ENCODE measurements at regions of chr4 and their contacts with region 1.

Region 1: DNA sequence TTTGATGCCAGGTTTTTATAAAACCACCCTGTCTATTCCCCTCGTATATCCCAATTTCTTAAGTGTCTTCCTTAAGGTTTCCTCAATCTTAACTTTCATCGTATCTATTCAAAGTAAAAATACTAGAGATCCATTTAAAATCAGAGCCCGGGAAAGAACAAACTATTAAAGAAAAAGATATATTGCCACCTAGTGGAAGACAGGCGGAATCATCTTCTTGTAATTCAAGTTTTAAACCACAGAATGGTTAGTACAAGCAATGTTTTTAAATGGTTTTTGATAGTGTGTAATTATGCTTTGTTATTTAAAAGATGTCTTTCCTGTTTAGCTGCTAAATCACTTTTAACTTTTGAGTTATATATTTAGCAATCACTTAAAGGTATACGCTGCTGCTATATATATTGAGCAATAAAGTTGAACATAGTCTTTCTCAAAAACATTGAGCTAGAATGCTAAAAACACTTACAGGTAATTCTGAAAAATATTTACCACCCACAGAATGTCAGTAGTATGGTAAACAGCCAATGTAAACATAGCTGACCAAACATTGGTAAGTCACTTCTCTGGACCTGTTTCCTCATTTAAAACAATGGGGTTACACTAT is 18.2 kb downstream of the PRDM8 start:
- DNase-seq: no peak
- ATAC-seq: peak in 1 of 4 donors; percentile 51
- H3K4me3 ChIP-seq: no peak overlapping the region
- H3K27ac ChIP-seq: peak overlapping the region in 2 of 12 donors; percentile 8 to 10
- H3K4me1 ChIP-seq: no peaks in the 10 kb centered on the region
- H3K27me3 ChIP-seq: peaks cover 0 to 41% (median 5%) of the 10 kb centered on the region in 9 donors
- CTCF ChIP-seq: peak; percentile 63 to 79 (median 73)
- POLR2A ChIP-seq: no peak

Region 2: DNA sequence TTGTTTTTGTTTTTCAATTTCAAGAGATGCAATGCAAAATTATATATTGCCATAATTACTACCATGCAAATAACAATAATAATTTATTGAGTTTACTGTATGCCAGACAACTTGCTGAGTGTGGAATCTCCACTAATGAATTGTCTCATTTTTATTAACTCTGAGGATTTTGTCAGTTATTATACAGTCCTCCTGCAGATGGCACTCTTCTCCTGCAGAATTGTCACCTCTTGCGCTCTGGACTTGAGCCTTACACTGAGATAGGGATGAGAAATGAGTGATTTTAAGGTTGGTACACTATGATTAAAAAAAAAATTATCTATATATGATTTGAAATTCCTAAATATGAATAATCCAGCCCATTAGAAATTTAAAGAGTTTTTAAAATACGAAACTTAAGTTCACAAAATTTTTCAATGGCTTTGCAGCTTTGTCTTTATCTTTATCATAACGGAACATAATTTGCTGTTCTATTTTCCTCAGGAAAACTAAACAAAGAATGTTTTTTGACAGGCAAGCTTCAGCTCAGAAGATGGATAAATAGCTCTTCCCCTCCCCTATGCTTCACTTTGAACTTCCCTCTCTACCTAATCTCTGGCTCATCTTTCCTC is 1263.6 kb before region 1 on chr4:
- intact Hi-C with region 1: loop called (anchors 1 to 10 kb)
- DNase-seq: peak in 1 of 5 donors; percentile 18
- ATAC-seq: peak; percentile 52 to 75 (median 68)
- H3K4me3 ChIP-seq: no peak overlapping the region
- H3K27ac ChIP-seq: no peak overlapping the region
- H3K4me1 ChIP-seq: no peaks in the 10 kb centered on the region
- H3K27me3 ChIP-seq: no peaks in the 10 kb centered on the region
- CTCF ChIP-seq: peak; percentile 54 to 85 (median 70)
- POLR2A ChIP-seq: no peak

Region 3: GRCh38 chr4:79030973-79031372 is 1184.6 kb before region 1 on chr4:
- intact Hi-C with region 1: loop called in 1 of 10 experiments (anchors 10 kb)
- DNase-seq: no peak
- ATAC-seq: no peak
- H3K4me3 ChIP-seq: no peak overlapping the region
- H3K27ac ChIP-seq: no peak overlapping the region
- H3K4me1 ChIP-seq: peaks cover 0 to 5% (median 0%) of the 10 kb centered on the region in 12 donors
- H3K27me3 ChIP-seq: no peaks in the 10 kb centered on the region
- CTCF ChIP-seq: no peak
- POLR2A ChIP-seq: no peak

Region 4: GRCh38 chr4:79042079-79042674 is 1173.4 kb before region 1 on chr4:
- intact Hi-C with region 1: loop called in 3 of 10 experiments (anchors 10 kb)
- DNase-seq: no peak
- ATAC-seq: peak in 3 of 4 donors; percentile 44 to 64 (median 61)
- H3K4me3 ChIP-seq: no peak overlapping the region
- H3K27ac ChIP-seq: no peak overlapping the region
- H3K4me1 ChIP-seq: peaks cover 0 to 4% (median 0%) of the 10 kb centered on the region in 12 donors
- H3K27me3 ChIP-seq: no peaks in the 10 kb centered on the region
- CTCF ChIP-seq: peak; percentile 32 to 70 (median 56)
- POLR2A ChIP-seq: no peak

Region 5: GRCh38 chr4:79917246-79917645 is 298.3 kb before region 1 on chr4:
- intact Hi-C with region 1: loop called in 2 of 10 experiments (anchors 5 to 10 kb)
- DNase-seq: peak in 4 of 5 donors; percentile 11 to 30 (median 28)
- ATAC-seq: peak in 2 of 4 donors; percentile 24 to 52
- H3K4me3 ChIP-seq: no peak overlapping the region
- H3K27ac ChIP-seq: no peak overlapping the region
- H3K4me1 ChIP-seq: peaks cover 0 to 4% (median 0%) of the 10 kb centered on the region in 12 donors
- H3K27me3 ChIP-seq: no peaks in the 10 kb centered on the region
- CTCF ChIP-seq: peak; percentile 31 to 58 (median 46)
- POLR2A ChIP-seq: no peak

Region 6: GRCh38 chr4:80279751-80280150 is 64.2 kb after region 1 on chr4:
- intact Hi-C with region 1: no loop called
- DNase-seq: no peak
- ATAC-seq: no peak
- H3K4me3 ChIP-seq: no peak overlapping the region
- H3K27ac ChIP-seq: no peak overlapping the region
- H3K4me1 ChIP-seq: no peaks in the 10 kb centered on the region
- H3K27me3 ChIP-seq: peaks cover 0 to 5% (median 0%) of the 10 kb centered on the region in 9 donors
- CTCF ChIP-seq: no peak
- POLR2A ChIP-seq: no peak

Region 7: GRCh38 chr4:80322716-80323115 is 107.2 kb after region 1 on chr4:
- intact Hi-C with region 1: loop called in 1 of 10 experiments (anchors 10 kb)
- DNase-seq: no peak
- ATAC-seq: peak in 1 of 4 donors; percentile 31
- H3K4me3 ChIP-seq: no peak overlapping the region
- H3K27ac ChIP-seq: no peak overlapping the region
- H3K4me1 ChIP-seq: no peaks in the 10 kb centered on the region
- H3K27me3 ChIP-seq: peaks cover 0 to 4% (median 0%) of the 10 kb centered on the region in 9 donors
- CTCF ChIP-seq: no peak
- POLR2A ChIP-seq: no peak

Measured in heart left ventricle (tissue), 16 donors.